T-cell (primary cell): ENCODE measurements at regions of chr20 and their contacts with region 1.

Region 1: DNA sequence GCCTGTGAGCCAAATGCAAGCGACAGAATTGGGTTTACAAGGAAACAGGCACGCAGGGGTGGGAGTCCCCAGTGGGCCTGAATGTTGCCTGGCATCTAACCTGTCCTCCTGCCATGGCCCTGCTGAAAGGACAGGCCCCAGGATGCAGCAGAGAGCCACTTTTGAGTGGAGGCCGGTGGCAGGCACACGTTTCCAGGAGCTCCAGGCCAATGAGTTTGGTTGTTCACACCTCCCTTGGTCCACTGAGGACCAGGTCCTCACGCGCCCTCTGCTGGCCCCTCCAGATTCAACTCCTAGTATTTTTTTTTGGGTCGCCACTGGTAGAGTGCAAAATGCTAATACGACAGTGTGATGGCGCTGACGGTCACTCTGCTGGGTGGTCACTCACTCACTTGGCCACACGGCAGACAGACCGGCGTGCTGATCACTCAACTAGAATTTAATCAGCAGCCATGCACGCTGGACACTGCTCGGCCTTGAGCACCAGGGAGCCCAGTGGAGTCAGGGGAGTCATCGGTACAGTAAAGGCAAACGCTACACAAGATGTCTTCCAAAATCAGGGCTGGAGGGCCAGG is 81.7 kb upstream of the NFATC2 start:
- DNase-seq: peak in 32 of 35 experiments; percentile 13 to 71 (median 50)
- ATAC-seq: peak in 2 of 4 experiments; percentile 27 to 42
- H3K4me3 ChIP-seq: no peak overlapping the region
- H3K4me3 Mint-ChIP-seq: no peak overlapping the region
- H3K27ac ChIP-seq: no peak overlapping the region
- H3K27ac Mint-ChIP-seq: peak overlapping the region in 1 of 2 donors; percentile 31
- H3K4me1 ChIP-seq: peaks cover 0 to 4% of the 10 kb centered on the region in 2 experiments
- H3K4me1 Mint-ChIP-seq: peaks cover 0 to 7% (median 1%) of the 10 kb centered on the region in 3 donors
- H3K27me3 ChIP-seq: peaks cover 0 to 3% of the 10 kb centered on the region in 2 experiments
- H3K27me3 Mint-ChIP-seq: peaks cover 0 to 5% of the 10 kb centered on the region in 2 donors

Region 2: GRCh38 chr20:51661609-51662178 is 37.5 kb after region 1 on chr20:
- CTCF ChIA-PET with region 1: interaction called in 1 of 2 experiments, 12 read pairs
- POLR2A ChIA-PET with region 1: no interaction called
- DNase-seq: peak in 11 of 35 experiments; percentile 4 to 61 (median 10)
- ATAC-seq: peak; percentile 68 to 99 (median 91)
- H3K4me3 ChIP-seq: no peak overlapping the region
- H3K4me3 Mint-ChIP-seq: no peak overlapping the region
- H3K27ac ChIP-seq: no peak overlapping the region
- H3K27ac Mint-ChIP-seq: peak overlapping the region in 1 of 2 donors; percentile 22
- H3K4me1 ChIP-seq: peaks cover 2 to 25% of the 10 kb centered on the region in 2 experiments
- H3K4me1 Mint-ChIP-seq: peaks cover 9 to 19% (median 12%) of the 10 kb centered on the region in 3 donors
- H3K27me3 ChIP-seq: peaks cover 0 to 9% of the 10 kb centered on the region in 2 experiments
- H3K27me3 Mint-ChIP-seq: peaks cover 0 to 5% of the 10 kb centered on the region in 2 donors

Region 3: DNA sequence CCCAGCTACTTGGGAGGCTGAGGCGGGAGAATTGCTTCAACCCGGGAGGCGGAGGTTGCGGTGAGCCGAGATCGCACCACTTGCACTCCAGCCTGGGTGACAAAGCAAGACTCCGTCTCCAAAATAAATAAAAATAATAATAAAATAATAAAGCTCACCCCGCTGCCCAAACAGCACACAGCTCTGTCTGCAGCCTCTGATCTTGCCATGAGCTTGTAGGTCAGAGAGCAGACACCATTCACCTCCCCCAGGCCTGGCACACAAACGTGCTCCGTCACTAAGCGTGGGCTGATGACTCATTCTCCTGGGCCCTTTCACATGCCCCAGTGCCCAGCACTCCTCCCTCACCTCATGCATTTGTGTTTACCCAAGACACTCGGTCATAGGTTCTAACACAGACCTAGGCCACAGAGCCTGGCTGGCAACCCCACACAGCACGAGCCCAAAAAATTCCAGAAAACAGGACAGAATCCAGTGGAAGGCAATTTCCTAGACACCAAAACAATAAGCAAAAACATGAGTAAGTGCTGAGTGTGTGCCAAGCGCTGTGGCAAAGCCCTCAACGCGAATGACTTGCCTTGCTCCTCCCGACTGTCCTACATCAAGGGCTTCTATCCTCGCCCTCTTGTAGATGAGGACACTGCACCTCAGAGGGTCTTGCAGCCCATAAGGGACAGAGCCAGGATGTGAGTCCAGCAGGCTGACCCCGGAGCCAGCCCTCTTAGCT is 126.0 kb after region 1 on chr20:
- CTCF ChIA-PET with region 1: no interaction called
- POLR2A ChIA-PET with region 1: no interaction called
- DNase-seq: no peak
- ATAC-seq: peak in 1 of 4 experiments; percentile 33
- H3K4me3 ChIP-seq: no peak overlapping the region
- H3K4me3 Mint-ChIP-seq: no peak overlapping the region
- H3K27ac ChIP-seq: no peak overlapping the region
- H3K27ac Mint-ChIP-seq: no peak overlapping the region
- H3K4me1 ChIP-seq: no peaks in the 10 kb centered on the region
- H3K4me1 Mint-ChIP-seq: no peaks in the 10 kb centered on the region
- H3K27me3 ChIP-seq: peaks cover 0 to 3% of the 10 kb centered on the region in 2 experiments
- H3K27me3 Mint-ChIP-seq: peaks cover 2 to 5% of the 10 kb centered on the region in 2 donors

Region 4: GRCh38 chr20:52047811-52048764 is 423.8 kb after region 1 on chr20:
- CTCF ChIA-PET with region 1: no interaction called
- POLR2A ChIA-PET with region 1: interaction called in 1 of 2 experiments, 16 read pairs
- DNase-seq: peak in 26 of 35 experiments; percentile 3 to 65 (median 14)
- ATAC-seq: peak in 2 of 4 experiments; percentile 43 to 62
- H3K4me3 ChIP-seq: no peak overlapping the region
- H3K4me3 Mint-ChIP-seq: no peak overlapping the region
- H3K27ac ChIP-seq: no peak overlapping the region
- H3K27ac Mint-ChIP-seq: no peak overlapping the region
- H3K4me1 ChIP-seq: peaks cover 2 to 13% of the 10 kb centered on the region in 2 experiments
- H3K4me1 Mint-ChIP-seq: peaks cover 10 to 17% (median 16%) of the 10 kb centered on the region in 3 donors
- H3K27me3 ChIP-seq: peaks cover 0 to 3% of the 10 kb centered on the region in 2 experiments
- H3K27me3 Mint-ChIP-seq: peaks cover 0 to 4% of the 10 kb centered on the region in 2 donors